CD4-positive, alpha-beta memory T cell (primary cell): ENCODE measurements at regions of chr11 and their contacts with region 1.

Region 1: GRCh38 chr11:69296890-69297786 is 3.2 kb downstream of the MYEOV start:
- DNase-seq: peak; percentile 78 to 91 (median 81)
- H3K4me3 ChIP-seq: peak overlapping the region; percentile 39 to 57
- H3K4me3 Mint-ChIP-seq: peak overlapping the region; percentile 79 to 93 (median 86)
- H3K27ac ChIP-seq: peak overlapping the region; percentile 36
- H3K27ac Mint-ChIP-seq: peak overlapping the region; percentile 76 to 99 (median 96)
- H3K4me1 ChIP-seq: peaks cover 65% of the 10 kb centered on the region
- H3K4me1 Mint-ChIP-seq: peaks cover 40 to 69% (median 55%) of the 10 kb centered on the region in 4 donors
- H3K27me3 ChIP-seq: no peaks in the 10 kb centered on the region
- H3K27me3 Mint-ChIP-seq: no peaks in the 10 kb centered on the region

Region 2: GRCh38 chr11:69311767-69312385 is 14.7 kb after region 1 on chr11:
- CTCF ChIA-PET with region 1: interaction called, 4 read pairs
- POLR2A ChIA-PET with region 1: interaction called, 13 read pairs
- intact Hi-C with region 1: no loop called
- DNase-seq: peak in 3 of 5 donors; percentile 21 to 33 (median 22)
- H3K4me3 ChIP-seq: peak overlapping the region in 1 of 2 donors; percentile 25
- H3K4me3 Mint-ChIP-seq: peak overlapping the region; percentile 46 to 86 (median 78)
- H3K27ac ChIP-seq: no peak overlapping the region
- H3K27ac Mint-ChIP-seq: peak overlapping the region; percentile 57 to 92 (median 84)
- H3K4me1 ChIP-seq: peaks cover 33% of the 10 kb centered on the region
- H3K4me1 Mint-ChIP-seq: peaks cover 21 to 44% (median 34%) of the 10 kb centered on the region in 4 donors
- H3K27me3 ChIP-seq: no peaks in the 10 kb centered on the region
- H3K27me3 Mint-ChIP-seq: no peaks in the 10 kb centered on the region

Region 3: DNA sequence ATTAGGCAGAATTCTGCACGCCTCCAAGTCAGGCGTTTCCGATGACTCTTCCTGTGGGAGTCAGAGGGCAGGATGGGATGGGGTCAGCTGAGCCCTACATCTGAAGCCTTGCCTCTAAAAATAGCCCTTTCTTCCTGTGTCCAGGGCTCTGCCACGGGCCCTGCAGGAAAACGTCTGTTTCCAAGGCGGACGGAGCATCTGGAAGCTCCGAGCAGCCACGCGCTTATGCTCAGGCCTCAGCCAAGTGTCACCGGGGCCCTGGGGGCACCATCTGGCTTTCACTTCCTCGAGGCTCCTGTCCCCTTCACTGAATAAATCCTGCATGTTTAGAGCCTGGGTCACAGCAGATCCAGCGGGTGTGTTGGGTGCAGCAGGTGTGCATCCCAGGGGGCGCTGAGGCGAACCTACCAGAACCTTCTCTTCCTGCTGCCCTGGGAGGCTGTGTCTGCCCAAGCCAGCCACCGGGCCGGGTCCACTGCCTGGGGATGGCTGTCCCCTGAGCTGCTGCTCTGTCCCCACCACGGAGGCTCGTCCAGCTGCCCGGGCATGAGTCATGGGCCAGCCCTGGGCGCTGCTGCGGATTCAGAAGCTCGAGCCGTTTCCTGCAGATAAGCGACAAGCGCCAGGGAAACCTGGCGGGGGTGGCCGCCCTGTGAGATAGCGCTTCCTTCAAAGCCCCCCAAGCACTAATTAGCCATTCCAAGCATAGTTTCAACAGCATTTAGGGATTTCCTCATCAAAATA is 152.4 kb after region 1 on chr11:
- CTCF ChIA-PET with region 1: no interaction called
- POLR2A ChIA-PET with region 1: no interaction called
- intact Hi-C with region 1: no loop called
- DNase-seq: no peak
- H3K4me3 ChIP-seq: no peak overlapping the region
- H3K4me3 Mint-ChIP-seq: no peak overlapping the region
- H3K27ac ChIP-seq: no peak overlapping the region
- H3K27ac Mint-ChIP-seq: no peak overlapping the region
- H3K4me1 ChIP-seq: no peaks in the 10 kb centered on the region
- H3K4me1 Mint-ChIP-seq: no peaks in the 10 kb centered on the region
- H3K27me3 ChIP-seq: no peaks in the 10 kb centered on the region
- H3K27me3 Mint-ChIP-seq: peaks cover 10 to 18% of the 10 kb centered on the region in 2 donors

Region 4: GRCh38 chr11:69642913-69643632 is 345.9 kb after region 1 on chr11:
- CTCF ChIA-PET with region 1: interaction called, 52 read pairs
- POLR2A ChIA-PET with region 1: no interaction called
- intact Hi-C with region 1: no loop called
- DNase-seq: peak; percentile 59 to 82 (median 78)
- H3K4me3 ChIP-seq: peak overlapping the region in 1 of 2 donors; percentile 64
- H3K4me3 Mint-ChIP-seq: peak overlapping the region; percentile 70 to 87 (median 76)
- H3K27ac ChIP-seq: no peak overlapping the region
- H3K27ac Mint-ChIP-seq: peak overlapping the region in 1 of 7 donors; percentile 10
- H3K4me1 ChIP-seq: peaks cover 40% of the 10 kb centered on the region
- H3K4me1 Mint-ChIP-seq: peaks cover 11 to 25% (median 18%) of the 10 kb centered on the region in 4 donors
- H3K27me3 ChIP-seq: peaks cover 21% of the 10 kb centered on the region
- H3K27me3 Mint-ChIP-seq: peaks cover 14 to 22% of the 10 kb centered on the region in 2 donors